ENCODE measurements at regions of chr11 and their contacts with region 1.

Region 1: DNA sequence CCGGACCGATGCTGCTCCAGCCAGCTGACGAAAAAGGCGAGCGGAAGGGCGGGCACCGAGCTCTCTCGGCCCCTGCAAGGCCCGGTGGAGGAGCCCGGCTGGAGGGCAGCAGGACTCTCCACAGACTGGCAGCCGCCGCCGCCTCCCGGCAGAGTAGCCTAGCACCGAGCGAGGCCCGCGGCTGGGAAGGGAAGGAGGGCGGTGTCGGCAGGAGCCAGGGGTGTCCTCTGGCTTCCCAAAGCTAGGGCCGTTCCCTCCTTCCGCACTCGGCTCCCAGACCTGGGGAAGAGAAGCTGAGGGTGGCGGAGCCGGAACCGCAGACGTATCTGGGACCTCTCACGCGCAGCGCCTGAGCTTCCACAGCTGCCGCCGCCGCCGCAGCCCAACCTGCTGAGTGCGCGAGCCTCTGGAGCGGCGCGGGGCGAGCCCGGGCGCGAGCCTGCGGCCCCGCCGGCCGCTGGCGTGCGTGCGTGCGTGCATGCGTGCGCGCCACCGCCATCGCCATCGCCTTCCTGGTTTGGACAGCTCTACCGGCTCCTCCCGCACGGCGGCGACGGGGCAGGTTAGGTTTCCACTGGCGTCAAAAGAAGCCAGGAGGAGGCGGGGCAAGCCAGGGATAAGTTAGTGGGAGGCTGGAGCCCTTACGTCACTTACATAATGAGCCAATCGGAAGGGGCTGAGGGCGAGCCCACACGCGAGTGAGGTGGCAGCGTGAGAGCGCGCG is at the start of gene RAB6A:
- DNase-seq: peak; percentile 99
- ATAC-seq: peak; percentile 90
- H3K4me3 ChIP-seq: peak within 1 kb of the TSS; percentile 86 to 94
- H3K27ac ChIP-seq: peak within 1 kb of the TSS; percentile 92
- H3K4me1 ChIP-seq: peaks cover 10 to 21% of the 10 kb centered on the region in 2 experiments; a peak in 3 of 4 replicates
- H3K27me3 ChIP-seq: no peaks in the 10 kb centered on the region
- CTCF ChIP-seq: peak in 1 of 3 experiments; percentile 34; a peak in 2 of 6 replicates
- POLR2A ChIP-seq: peak; percentile 82
- RAD21 ChIP-seq: no peak; the same call in 1 of the 2 replicates
- total RNA-seq, gene RAB6A: 121 TPM

Region 2: GRCh38 chr11:73787643-73788537 is 27.0 kb after region 1 on chr11 and contains the start of gene MRPL48:
- CTCF ChIA-PET with region 1: no interaction called
- POLR2A ChIA-PET with region 1: interaction called, 14 read pairs
- RAD21 ChIA-PET with region 1: no interaction called
- intact Hi-C with region 1: no loop called
- DNase-seq: peak; percentile 91
- ATAC-seq: peak; percentile 96
- H3K4me3 ChIP-seq: peak within 1 kb of the TSS; percentile 79 to 88
- H3K27ac ChIP-seq: peak within 1 kb of the TSS; percentile 88
- H3K4me1 ChIP-seq: peaks cover 17 to 22% of the 10 kb centered on the region in 2 experiments
- H3K27me3 ChIP-seq: no peaks in the 10 kb centered on the region
- CTCF ChIP-seq: no peak
- POLR2A ChIP-seq: peak; percentile 75
- RAD21 ChIP-seq: no peak
- total RNA-seq, gene MRPL48: 66.8 TPM

Region 3: DNA sequence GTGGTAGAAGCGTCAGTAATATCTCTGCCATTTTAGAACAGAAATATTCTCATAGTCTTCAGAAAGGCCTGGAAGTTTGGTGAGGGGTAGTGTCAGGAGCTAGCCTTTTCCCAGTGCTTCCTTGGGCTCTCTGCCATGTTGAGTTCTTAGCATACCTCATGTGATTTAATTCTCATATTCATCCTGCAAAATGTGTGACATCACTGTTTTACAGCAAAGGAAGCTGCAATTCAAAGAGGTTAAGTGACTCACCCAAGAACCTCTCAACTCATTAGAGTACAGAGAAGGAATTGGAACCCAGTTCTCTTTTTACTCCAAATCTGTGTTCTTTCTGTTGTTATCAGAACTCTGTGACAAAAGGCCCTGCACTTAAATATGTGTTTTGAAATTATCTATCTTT is 1059.9 kb after region 1 on chr11:
- CTCF ChIA-PET with region 1: no interaction called
- POLR2A ChIA-PET with region 1: no interaction called
- RAD21 ChIA-PET with region 1: no interaction called
- intact Hi-C with region 1: no loop called
- DNase-seq: no peak
- ATAC-seq: no peak
- H3K4me3 ChIP-seq: no peak overlapping the region
- H3K27ac ChIP-seq: no peak overlapping the region
- H3K4me1 ChIP-seq: peaks cover 0 to 7% of the 10 kb centered on the region in 2 experiments; a peak in 1 of 4 replicates
- H3K27me3 ChIP-seq: no peaks in the 10 kb centered on the region
- CTCF ChIP-seq: no peak
- POLR2A ChIP-seq: no peak
- RAD21 ChIP-seq: no peak